ENCODE measurements at regions of chr7 and their contacts with region 1.

Region 1: DNA sequence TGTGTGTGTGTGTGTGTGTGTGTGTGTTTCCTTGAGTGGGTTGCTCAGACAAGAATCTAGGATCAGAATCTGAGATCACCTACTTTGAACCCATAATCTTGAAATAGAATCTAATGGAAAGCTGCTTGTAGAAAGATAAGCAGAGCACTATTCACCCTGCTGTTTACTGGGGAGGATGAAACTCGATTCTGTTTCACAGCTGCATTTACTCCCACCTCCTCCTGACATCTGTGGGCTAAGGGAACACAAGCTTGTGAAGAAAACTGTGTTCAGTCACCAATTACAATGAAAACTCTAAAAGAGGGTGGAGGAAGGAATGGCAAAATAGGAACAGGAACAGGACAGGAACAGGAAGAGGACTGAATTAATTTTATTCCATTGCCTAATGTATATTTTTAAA is 269.5 kb downstream of the TSPAN12 start:
- DNase-seq: no peak
- ATAC-seq: no peak
- H3K4me3 ChIP-seq: no peak overlapping the region
- H3K27ac ChIP-seq: no peak overlapping the region
- H3K4me1 ChIP-seq: no peaks in the 10 kb centered on the region
- H3K27me3 ChIP-seq: no peaks in the 10 kb centered on the region
- CTCF ChIP-seq: no peak

Region 2: GRCh38 chr7:120131096-120131839 is 457.1 kb before region 1 on chr7:
- intact Hi-C with region 1: no loop called
- DNase-seq: no peak
- ATAC-seq: no peak
- H3K4me3 ChIP-seq: no peak overlapping the region
- H3K27ac ChIP-seq: no peak overlapping the region
- H3K4me1 ChIP-seq: no peaks in the 10 kb centered on the region
- H3K27me3 ChIP-seq: no peaks in the 10 kb centered on the region
- CTCF ChIP-seq: no peak

Region 3: DNA sequence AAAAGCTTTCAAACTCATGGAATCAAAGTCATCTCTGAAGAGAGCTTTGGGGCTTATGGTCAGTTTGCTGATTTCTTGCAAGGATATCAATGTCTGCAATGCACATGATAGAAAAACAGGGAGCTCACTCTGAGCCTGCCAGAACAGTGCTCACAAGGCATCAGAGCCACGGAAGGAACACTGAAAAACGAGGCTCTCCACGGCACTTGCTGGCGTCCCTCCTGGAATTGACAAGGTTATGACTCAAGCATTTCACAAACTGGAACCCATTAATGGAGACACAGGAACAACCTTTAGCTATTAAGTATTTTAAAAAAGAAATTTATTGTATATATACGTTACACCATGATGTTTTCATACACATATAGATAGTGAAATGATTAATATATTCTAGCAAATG is 49.1 kb before region 1 on chr7:
- intact Hi-C with region 1: loop called in 1 of 10 experiments (anchors 10 kb)
- DNase-seq: no peak
- ATAC-seq: no peak
- H3K4me3 ChIP-seq: no peak overlapping the region
- H3K27ac ChIP-seq: no peak overlapping the region
- H3K4me1 ChIP-seq: no peaks in the 10 kb centered on the region
- H3K27me3 ChIP-seq: no peaks in the 10 kb centered on the region
- CTCF ChIP-seq: no peak

Measured in heart right ventricle (tissue), 16 donors.